Naive thymus-derived CD4-positive, alpha-beta T cell (primary cell): ENCODE measurements at regions of chrX and their contacts with region 1.

Region 1: GRCh38 chrX:136564698-136565097 is 32.7 kb downstream of the VGLL1 start:
- DNase-seq: no peak
- ATAC-seq: no peak
- H3K4me3 ChIP-seq: no peak overlapping the region
- H3K4me3 Mint-ChIP-seq: no peak overlapping the region
- H3K27ac ChIP-seq: no peak overlapping the region
- H3K27ac Mint-ChIP-seq: no peak overlapping the region
- H3K4me1 ChIP-seq: no peaks in the 10 kb centered on the region
- H3K4me1 Mint-ChIP-seq: peaks cover 0 to 4% (median 0%) of the 10 kb centered on the region in 7 donors
- H3K27me3 ChIP-seq: no peaks in the 10 kb centered on the region
- H3K27me3 Mint-ChIP-seq: peaks cover 0 to 29% (median 0%) of the 10 kb centered on the region in 5 donors

Region 2: GRCh38 chrX:136598631-136599030 is 33.9 kb after region 1 on chrX:
- CTCF ChIA-PET with region 1: no interaction called
- POLR2A ChIA-PET with region 1: no interaction called
- intact Hi-C with region 1: loop called in 1 of 2 experiments (anchors 1 kb)
- DNase-seq: no peak
- ATAC-seq: peak; percentile 46
- H3K4me3 ChIP-seq: no peak overlapping the region
- H3K4me3 Mint-ChIP-seq: peak overlapping the region in 3 of 10 donors; percentile 16 to 76 (median 40)
- H3K27ac ChIP-seq: no peak overlapping the region
- H3K27ac Mint-ChIP-seq: peak overlapping the region in 4 of 9 donors; percentile 33 to 89 (median 66)
- H3K4me1 ChIP-seq: peaks cover 0 to 4% of the 10 kb centered on the region in 2 donors
- H3K4me1 Mint-ChIP-seq: peaks cover 8 to 49% (median 16%) of the 10 kb centered on the region in 7 donors
- H3K27me3 ChIP-seq: no peaks in the 10 kb centered on the region
- H3K27me3 Mint-ChIP-seq: no peaks in the 10 kb centered on the region

Region 3: DNA sequence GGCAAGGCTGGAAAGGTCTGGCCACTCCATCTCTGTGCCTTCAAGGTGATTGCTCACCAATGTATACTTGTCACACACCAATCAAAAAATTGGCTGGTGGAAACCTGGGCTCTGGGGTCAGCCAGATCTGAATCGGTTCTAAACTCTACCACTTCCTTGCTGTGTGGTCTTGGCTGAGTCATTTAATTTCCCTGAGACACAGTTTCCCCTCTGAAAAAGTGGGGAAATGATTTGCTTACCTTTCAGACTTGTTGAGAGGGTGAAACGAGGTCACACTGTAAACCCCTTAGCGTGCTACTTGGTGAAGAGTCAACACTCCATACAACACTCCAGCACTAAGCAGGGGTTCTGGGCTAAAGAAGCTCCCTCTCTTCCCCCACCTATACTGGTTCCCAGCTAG is 748.9 kb after region 1 on chrX:
- CTCF ChIA-PET with region 1: no interaction called
- POLR2A ChIA-PET with region 1: no interaction called
- intact Hi-C with region 1: no loop called
- DNase-seq: peak in 1 of 9 donors; percentile 11
- ATAC-seq: no peak
- H3K4me3 ChIP-seq: no peak overlapping the region
- H3K4me3 Mint-ChIP-seq: no peak overlapping the region
- H3K27ac ChIP-seq: no peak overlapping the region
- H3K27ac Mint-ChIP-seq: no peak overlapping the region
- H3K4me1 ChIP-seq: no peaks in the 10 kb centered on the region
- H3K4me1 Mint-ChIP-seq: no peaks in the 10 kb centered on the region
- H3K27me3 ChIP-seq: no peaks in the 10 kb centered on the region
- H3K27me3 Mint-ChIP-seq: no peaks in the 10 kb centered on the region